Posterior cingulate gyrus (tissue), 11 donors: ENCODE measurements at regions of chrX and their contacts with region 1.

Region 1: GRCh38 chrX:20252381-20253231 is 14.1 kb downstream of the RPS6KA3 start:
- DNase-seq: peak in 5 of 10 donors; percentile 12 to 80 (median 51)

Region 2: DNA sequence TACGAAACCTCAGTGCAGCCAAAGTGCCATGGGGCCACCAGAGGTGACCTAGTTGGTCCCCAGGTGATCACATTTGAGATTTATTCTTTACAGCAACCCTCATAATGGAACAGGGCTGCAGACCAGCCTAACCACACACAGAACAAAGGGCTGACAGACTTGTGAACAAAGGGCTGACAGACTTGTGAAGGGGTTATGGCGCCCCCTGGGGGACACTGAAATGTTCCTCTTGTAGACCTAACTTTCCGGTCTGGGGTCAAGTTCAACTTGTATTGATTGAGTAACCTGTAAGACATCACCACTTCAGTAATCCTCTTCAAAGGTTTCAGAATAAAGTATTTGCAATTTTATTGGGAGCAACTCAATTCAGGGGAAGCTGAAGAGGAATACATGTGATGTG is 190.0 kb after region 1 on chrX:
- intact Hi-C with region 1: loop called (anchors 2 kb)
- DNase-seq: peak; percentile 25 to 94 (median 73)